Activated CD8-positive, alpha-beta T cell treated with anti-CD3 and anti-CD28 coated beads for 36 hours (primary cell): ENCODE measurements at regions of chr15 and their contacts with region 1.

Region 1: DNA sequence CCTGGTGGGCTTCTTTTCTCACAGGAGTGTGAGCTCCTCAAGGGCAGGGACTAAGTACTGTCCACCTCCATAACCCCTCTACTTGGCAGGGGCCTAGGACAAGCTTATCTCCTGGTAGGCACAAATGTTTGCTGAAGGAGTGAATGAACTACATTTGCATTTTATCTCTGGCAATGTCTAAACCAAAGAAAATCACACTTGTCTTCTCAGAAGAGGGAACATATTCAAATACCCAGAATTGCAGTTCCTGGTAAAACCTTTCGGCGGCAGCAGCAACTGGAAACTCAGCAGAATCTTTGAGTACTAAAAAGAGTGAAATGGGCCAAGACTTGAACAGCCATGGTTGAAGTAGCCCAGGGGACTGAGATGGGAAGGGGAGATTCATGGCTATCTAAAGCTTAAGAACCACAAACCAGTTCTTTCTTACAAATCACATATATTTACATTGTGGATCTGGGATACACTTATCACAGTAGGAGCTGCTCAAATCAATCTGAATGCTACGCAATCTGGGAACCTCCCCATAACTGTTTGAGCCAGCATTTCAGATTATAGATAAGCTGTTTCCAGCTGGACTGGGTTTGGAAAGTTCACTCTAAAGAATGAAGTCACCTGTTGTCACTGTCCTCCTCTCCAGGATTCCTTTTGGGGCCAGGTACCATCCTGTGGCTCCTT is 18.7 kb upstream of the PTPN9 start:
- DNase-seq: peak; percentile 79
- ATAC-seq: peak; percentile 88
- H3K4me3 Mint-ChIP-seq: peak overlapping the region; percentile 25
- H3K27ac Mint-ChIP-seq: peak overlapping the region; percentile 84
- H3K4me1 Mint-ChIP-seq: peaks cover 25% of the 10 kb centered on the region
- H3K27me3 Mint-ChIP-seq: no peaks in the 10 kb centered on the region
- CTCF ChIP-seq: peak; percentile 64

Region 2: GRCh38 chr15:75420698-75421097 is 177.1 kb before region 1 on chr15:
- CTCF ChIA-PET with region 1: no interaction called
- POLR2A ChIA-PET with region 1: no interaction called
- intact Hi-C with region 1: no loop called
- DNase-seq: no peak
- ATAC-seq: no peak
- H3K4me3 Mint-ChIP-seq: no peak overlapping the region
- H3K27ac Mint-ChIP-seq: no peak overlapping the region
- H3K4me1 Mint-ChIP-seq: peaks cover 13% of the 10 kb centered on the region
- H3K27me3 Mint-ChIP-seq: no peaks in the 10 kb centered on the region
- CTCF ChIP-seq: no peak

Region 3: DNA sequence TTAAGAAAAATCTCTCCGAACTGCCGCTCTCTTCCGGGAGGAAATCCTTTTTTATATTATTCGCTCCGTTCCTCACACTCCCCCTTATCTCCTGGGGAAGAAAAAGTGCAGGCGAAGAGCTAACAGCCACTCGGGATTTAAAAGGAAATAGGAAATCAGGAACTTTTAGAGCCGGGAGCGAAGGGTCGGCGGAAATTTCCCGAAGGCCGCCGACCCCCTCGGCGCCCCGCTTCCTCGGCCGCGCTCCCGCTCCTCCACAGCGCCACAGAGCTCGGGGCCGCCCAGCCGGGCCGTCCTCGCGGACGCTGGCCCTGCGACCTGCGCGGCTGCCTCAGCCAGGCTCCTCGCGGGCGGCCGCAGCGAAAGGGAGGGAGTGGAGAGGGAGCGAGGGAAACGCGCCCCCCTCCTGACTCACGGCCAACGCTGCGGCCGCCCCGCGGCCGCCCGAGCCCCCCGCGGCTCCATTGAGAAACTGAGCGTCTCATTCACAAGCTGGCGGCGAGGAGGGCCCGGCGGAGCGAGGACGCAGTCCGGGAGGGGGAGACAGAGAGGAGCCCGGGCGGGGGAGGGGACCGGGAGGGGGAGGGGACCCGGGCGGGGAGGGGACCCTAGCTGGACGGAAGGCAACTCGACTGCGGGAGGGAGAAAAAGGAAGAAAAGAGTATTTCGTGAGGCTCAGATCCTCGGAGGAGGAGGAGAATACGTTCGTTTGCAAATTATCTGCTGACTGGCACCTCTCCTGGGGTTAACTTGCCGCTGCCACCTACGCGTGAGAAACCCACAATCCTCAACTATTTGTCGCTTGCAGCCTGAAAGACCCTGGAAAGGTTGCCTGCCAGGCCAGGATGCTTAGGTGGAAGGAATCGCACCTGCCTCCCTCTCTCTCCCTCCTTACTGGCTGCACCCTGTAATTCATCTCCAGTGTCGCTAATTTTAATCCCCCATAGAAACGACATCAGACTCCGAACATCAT is 18.6 kb before region 1 on chr15 and contains the start of gene PTPN9:
- CTCF ChIA-PET with region 1: interaction called, 5 read pairs
- POLR2A ChIA-PET with region 1: interaction called, 18 read pairs
- intact Hi-C with region 1: no loop called
- DNase-seq: peak; percentile 79
- ATAC-seq: peak; percentile 89
- H3K4me3 Mint-ChIP-seq: peak within 1 kb of the TSS; percentile 88
- H3K27ac Mint-ChIP-seq: peak within 1 kb of the TSS; percentile 91
- H3K4me1 Mint-ChIP-seq: peaks cover 18% of the 10 kb centered on the region
- H3K27me3 Mint-ChIP-seq: no peaks in the 10 kb centered on the region
- CTCF ChIP-seq: peak; percentile 71
- total RNA-seq, gene PTPN9: 12.3 to 12.9 TPM